ENCODE measurements at regions of chr1 and their contacts with region 1.

Region 1: DNA sequence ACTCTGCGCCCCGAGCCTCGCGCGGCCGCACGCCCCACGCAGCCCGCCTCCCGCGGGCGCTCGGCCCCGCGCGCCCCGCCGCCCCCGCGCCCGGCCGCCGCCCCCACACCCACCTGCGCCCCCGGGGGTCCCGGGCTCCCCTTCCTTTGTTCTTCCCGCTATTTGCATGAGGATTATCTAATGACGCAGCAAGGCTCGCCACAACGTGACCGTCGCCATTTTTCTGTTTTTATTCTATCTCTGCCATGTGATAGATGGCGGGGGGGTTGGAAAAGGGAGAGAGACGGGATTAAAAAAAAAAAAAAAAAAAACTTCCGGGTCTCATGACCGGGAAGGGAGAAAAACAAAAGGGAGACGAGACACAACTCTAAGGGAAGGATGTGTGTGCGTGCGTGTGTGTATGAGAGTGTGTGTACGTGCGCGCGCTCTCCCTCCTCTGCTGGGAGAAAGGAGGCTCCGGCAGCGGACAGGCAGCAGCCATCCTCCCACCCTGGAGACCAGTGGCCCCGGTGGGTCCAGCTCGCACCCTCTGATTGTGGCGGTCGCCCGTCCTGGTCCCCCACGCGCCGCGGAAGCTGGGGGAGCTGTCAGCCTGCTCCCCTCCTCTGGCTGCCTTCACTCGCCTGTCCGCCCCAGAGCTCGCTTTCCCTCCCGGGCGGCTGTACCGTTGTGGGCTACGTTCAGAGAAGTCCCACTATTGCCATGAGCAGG is 80.4 kb upstream of the AK4 start:
- DNase-seq: peak; percentile 89
- H3K4me3 ChIP-seq: peak overlapping the region; percentile 91 to 95 (median 94)
- H3K27ac ChIP-seq: peak overlapping the region; percentile 99 to 100 (median 100)
- H3K4me1 ChIP-seq: peaks cover 0 to 39% (median 34%) of the 10 kb centered on the region in 4 donors
- H3K27me3 ChIP-seq: no peaks in the 10 kb centered on the region
- CTCF ChIP-seq: no peak
- EP300 ChIP-seq: no peak
- POLR2A ChIP-seq: peak; percentile 74 to 79

Region 2: GRCh38 chr1:64686828-64687724 is 380.6 kb before region 1 on chr1:
- intact Hi-C with region 1: loop called (anchors 10 kb)
- DNase-seq: no peak
- H3K4me3 ChIP-seq: no peak overlapping the region
- H3K27ac ChIP-seq: no peak overlapping the region
- H3K4me1 ChIP-seq: peaks cover 0 to 23% (median 12%) of the 10 kb centered on the region in 4 donors
- H3K27me3 ChIP-seq: no peaks in the 10 kb centered on the region
- CTCF ChIP-seq: peak; percentile 46 to 83 (median 74)
- EP300 ChIP-seq: no peak
- POLR2A ChIP-seq: no peak

Region 3: GRCh38 chr1:64856553-64856952 is 211.1 kb before region 1 on chr1:
- intact Hi-C with region 1: loop called (anchors 5 kb)
- DNase-seq: peak; percentile 93
- H3K4me3 ChIP-seq: no peak overlapping the region
- H3K27ac ChIP-seq: peak overlapping the region in 3 of 4 donors; percentile 5 to 71 (median 64)
- H3K4me1 ChIP-seq: peaks cover 0 to 11% (median 8%) of the 10 kb centered on the region in 4 donors
- H3K27me3 ChIP-seq: no peaks in the 10 kb centered on the region
- CTCF ChIP-seq: no peak
- EP300 ChIP-seq: peak in 2 of 4 donors; percentile 62
- POLR2A ChIP-seq: no peak

Region 4: DNA sequence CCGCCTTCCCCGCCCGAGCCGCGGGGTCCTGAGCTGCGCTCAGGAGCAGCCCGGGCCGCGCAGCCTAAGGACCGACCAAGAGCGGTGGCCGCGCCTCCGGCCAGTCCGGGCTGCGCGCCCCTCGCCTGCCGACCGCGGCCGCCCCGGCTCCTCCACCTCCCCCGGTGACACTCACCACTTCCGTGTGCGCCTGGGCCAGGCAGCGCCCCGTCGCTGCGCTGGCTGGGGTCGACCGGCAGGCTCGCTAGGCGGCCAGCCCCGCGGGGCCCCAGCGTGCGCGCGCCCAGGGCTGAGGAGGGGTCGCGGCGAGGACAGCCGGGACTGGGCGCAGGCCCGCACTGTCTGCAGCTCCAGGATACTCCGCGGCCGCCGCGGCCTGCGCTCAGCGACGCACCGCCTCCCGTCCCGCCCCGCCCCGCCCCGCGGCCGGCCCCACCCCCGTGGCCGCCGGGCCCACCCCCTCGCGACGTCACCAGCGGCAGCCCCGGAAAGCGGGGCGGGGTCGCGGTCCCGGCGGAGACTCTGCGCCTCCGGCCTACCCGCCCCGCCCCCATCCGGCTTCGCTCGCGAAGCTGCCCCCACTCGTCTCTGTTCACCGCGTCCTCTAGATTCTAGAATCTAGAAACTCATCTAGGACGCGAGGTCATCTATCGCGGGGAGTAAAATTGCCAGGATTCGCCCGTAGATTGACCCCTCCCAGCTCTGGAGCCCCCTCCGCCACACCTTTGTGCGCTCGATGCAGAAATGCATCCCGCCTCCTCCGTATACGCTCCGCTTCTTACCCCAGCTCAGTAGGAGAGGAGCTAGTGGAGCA is 101.3 kb before region 1 on chr1 and contains the start of gene JAK1:
- intact Hi-C with region 1: loop called (anchors 2 kb)
- DNase-seq: peak; percentile 94
- H3K4me3 ChIP-seq: peak within 1 kb of the TSS; percentile 51 to 97 (median 82)
- H3K27ac ChIP-seq: peak within 1 kb of the TSS; percentile 89 to 100 (median 94)
- H3K4me1 ChIP-seq: peaks cover 0 to 34% (median 24%) of the 10 kb centered on the region in 4 donors
- H3K27me3 ChIP-seq: no peaks in the 10 kb centered on the region
- CTCF ChIP-seq: no peak
- EP300 ChIP-seq: no peak
- POLR2A ChIP-seq: no peak
- total RNA-seq, gene JAK1: 99.6 to 143 (median 119) TPM

Region 5: DNA sequence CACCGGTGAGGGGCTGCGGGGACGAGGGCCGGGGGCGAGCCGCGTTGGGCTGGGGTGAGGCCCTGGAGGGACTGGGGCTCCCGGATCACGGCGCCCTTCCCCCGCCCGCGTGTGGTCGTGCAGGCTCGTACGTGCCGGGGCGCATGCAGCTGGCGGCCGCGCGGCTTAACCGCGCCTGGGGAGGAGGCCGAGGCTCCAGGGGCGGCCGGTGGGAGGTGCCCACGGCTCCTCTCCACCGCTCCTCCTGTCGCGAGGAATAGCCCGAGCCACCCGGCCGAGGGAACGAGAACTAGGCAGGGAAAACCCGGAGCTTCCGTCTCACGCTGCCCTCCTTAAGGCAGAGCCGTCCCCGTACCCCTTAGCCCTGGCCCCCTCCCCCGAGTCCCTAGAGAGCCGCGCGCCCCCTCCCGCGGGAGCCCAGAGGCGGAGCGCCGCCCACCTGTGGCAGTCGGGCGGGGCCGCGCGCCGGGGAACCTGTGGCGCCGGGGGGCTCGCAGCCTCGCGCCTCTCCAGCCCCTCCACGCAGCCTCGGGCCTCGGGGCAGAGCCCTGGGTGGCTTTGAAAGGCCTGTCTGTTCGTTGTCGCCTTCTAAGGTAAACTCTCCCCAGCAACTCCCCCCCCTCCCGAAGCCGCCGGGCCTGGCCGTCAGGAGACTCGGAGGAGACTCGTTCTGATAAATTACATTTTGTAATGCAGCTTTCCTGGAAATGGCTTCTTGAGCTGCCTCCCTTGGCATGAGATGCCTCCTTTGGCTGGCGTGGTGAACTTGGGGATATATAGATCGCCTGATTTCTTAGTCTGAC is 81.1 kb after region 1 on chr1:
- intact Hi-C with region 1: loop called (anchors 1 kb)
- DNase-seq: peak; percentile 85
- H3K4me3 ChIP-seq: peak overlapping the region; percentile 56 to 91 (median 66)
- H3K27ac ChIP-seq: peak overlapping the region; percentile 80 to 94 (median 91)
- H3K4me1 ChIP-seq: peaks cover 0 to 34% (median 20%) of the 10 kb centered on the region in 4 donors
- H3K27me3 ChIP-seq: no peaks in the 10 kb centered on the region
- CTCF ChIP-seq: no peak
- EP300 ChIP-seq: no peak
- POLR2A ChIP-seq: no peak

Region 6: GRCh38 chr1:65395887-65396612 is 328.4 kb after region 1 on chr1:
- intact Hi-C with region 1: no loop called
- DNase-seq: no peak
- H3K4me3 ChIP-seq: no peak overlapping the region
- H3K27ac ChIP-seq: no peak overlapping the region
- H3K4me1 ChIP-seq: no peaks in the 10 kb centered on the region
- H3K27me3 ChIP-seq: no peaks in the 10 kb centered on the region
- CTCF ChIP-seq: no peak
- EP300 ChIP-seq: no peak
- POLR2A ChIP-seq: no peak

Region 7: GRCh38 chr1:65687428-65688214 is 620.0 kb after region 1 on chr1:
- intact Hi-C with region 1: loop called (anchors 10 kb)
- DNase-seq: peak; percentile 90
- H3K4me3 ChIP-seq: no peak overlapping the region
- H3K27ac ChIP-seq: no peak overlapping the region
- H3K4me1 ChIP-seq: peaks cover 0 to 7% (median 5%) of the 10 kb centered on the region in 4 donors
- H3K27me3 ChIP-seq: no peaks in the 10 kb centered on the region
- CTCF ChIP-seq: peak; percentile 64 to 97 (median 90)
- EP300 ChIP-seq: no peak
- POLR2A ChIP-seq: no peak